ENCODE measurements at regions of chr7 and their contacts with region 1.

Region 1: DNA sequence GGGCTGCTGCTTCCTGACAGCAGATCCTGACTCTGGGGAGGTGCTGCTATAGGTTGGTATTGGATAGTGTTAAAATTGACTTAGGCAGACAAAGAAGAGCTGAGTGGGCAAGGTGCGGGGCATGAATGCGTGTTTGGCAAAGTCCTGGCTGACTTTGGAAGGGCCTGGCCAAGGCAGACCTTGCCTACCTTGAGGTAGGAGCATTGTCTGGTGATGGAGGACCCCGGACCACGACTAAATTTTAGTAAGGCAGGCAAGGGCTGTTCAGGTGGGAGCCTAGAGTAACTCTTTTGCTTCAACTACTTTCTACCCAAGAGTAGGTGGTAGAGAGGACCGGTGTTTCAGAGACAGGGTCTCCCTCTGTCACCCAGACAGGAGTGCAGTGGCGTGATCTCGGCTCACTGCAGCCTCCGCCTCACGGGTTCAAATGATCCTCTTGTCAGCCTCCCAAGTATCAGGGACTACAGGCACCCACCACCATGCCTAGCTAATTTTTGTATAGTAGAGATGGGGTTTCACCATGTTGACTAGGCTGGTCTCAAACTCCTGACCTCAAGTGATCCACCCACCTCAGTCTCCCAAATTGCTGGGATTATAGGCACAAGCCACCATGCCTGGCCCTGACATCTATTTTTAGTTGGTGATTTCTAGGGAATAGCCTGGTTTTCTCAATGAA is 12.2 kb upstream of the LAT2 start:
- DNase-seq: no peak
- ATAC-seq: no peak
- H3K4me3 Mint-ChIP-seq: no peak overlapping the region
- H3K27ac Mint-ChIP-seq: no peak overlapping the region
- H3K4me1 Mint-ChIP-seq: peaks cover 20% of the 10 kb centered on the region
- H3K27me3 Mint-ChIP-seq: no peaks in the 10 kb centered on the region

Region 2: GRCh38 chr7:73941836-73942551 is 255.6 kb before region 1 on chr7:
- CTCF ChIA-PET with region 1: no interaction called
- POLR2A ChIA-PET with region 1: no interaction called
- DNase-seq: no peak
- ATAC-seq: no peak
- H3K4me3 Mint-ChIP-seq: no peak overlapping the region
- H3K27ac Mint-ChIP-seq: no peak overlapping the region
- H3K4me1 Mint-ChIP-seq: no peaks in the 10 kb centered on the region
- H3K27me3 Mint-ChIP-seq: no peaks in the 10 kb centered on the region

Region 3: DNA sequence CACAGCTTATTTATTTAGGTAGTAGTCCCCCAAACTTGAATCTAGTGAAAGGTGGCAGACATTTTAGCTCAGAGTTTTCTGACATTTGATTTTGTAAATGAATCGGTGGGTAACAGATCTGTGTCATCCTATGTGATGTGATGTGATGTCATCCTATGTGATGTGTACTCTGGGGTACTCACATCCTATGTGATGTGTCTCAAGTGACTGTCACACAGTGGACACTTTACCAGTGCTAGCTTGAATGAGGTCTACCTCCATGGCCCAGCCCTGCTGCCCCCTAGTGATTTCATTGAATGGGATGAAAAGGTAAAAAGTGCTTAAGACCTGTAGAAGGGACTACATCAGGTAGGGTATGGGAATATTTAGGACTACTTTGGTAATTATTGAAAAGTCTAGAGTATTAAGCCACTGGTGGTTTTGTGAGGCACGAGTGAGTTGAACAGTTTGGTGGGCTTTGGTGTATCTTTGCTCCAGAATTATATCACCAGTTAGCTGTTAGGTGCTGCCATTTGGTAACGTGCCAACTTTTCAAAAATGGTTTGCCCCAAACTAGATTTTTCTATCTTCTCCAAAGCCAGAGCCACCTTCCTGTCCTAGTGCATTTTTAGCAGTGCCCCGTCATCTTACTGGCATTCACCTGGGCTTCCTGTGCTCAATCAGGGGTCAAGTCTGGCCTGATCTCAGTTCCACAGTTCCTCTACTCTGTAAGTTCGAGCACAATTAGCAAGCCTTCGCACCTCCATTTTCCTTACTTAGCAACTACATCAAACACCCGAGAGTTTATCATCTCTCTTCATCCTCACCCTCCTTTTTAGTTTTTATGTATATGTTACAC is 13.8 kb before region 1 on chr7:
- CTCF ChIA-PET with region 1: interaction called, 51 read pairs
- POLR2A ChIA-PET with region 1: interaction called, 6 read pairs
- DNase-seq: peak; percentile 42
- ATAC-seq: peak; percentile 68
- H3K4me3 Mint-ChIP-seq: no peak overlapping the region
- H3K27ac Mint-ChIP-seq: peak overlapping the region; percentile 40
- H3K4me1 Mint-ChIP-seq: peaks cover 66% of the 10 kb centered on the region
- H3K27me3 Mint-ChIP-seq: no peaks in the 10 kb centered on the region

Measured in activated CD8-positive, alpha-beta T cell treated with anti-CD3 and anti-CD28 coated beads, Interleukin-2, amount 10 ng/mL, durations not matched to agents 7 days and 5 days (primary cell).